Activated T-helper 2 cell treated with anti-CD3 and anti-CD28 coated beads, Interferon-gamma antibody, Interleukin-2, Interleukin-4, amounts not matched to agents 10 μg/mL and 5 μg/mL and 100 μg/mL, durations not matched to agents 14 hours and 24 hours and 36 hours (primary cell): ENCODE measurements at regions of chr20 and their contacts with region 1.

Region 1: GRCh38 chr20:8271727-8272126 is 139.7 kb downstream of the PLCB1 start:
- DNase-seq: no peak
- H3K4me3 Mint-ChIP-seq: no peak overlapping the region
- H3K27ac Mint-ChIP-seq: peak overlapping the region; percentile 33
- H3K4me1 Mint-ChIP-seq: peaks cover 22% of the 10 kb centered on the region
- H3K27me3 Mint-ChIP-seq: peaks cover 6% of the 10 kb centered on the region

Region 2: DNA sequence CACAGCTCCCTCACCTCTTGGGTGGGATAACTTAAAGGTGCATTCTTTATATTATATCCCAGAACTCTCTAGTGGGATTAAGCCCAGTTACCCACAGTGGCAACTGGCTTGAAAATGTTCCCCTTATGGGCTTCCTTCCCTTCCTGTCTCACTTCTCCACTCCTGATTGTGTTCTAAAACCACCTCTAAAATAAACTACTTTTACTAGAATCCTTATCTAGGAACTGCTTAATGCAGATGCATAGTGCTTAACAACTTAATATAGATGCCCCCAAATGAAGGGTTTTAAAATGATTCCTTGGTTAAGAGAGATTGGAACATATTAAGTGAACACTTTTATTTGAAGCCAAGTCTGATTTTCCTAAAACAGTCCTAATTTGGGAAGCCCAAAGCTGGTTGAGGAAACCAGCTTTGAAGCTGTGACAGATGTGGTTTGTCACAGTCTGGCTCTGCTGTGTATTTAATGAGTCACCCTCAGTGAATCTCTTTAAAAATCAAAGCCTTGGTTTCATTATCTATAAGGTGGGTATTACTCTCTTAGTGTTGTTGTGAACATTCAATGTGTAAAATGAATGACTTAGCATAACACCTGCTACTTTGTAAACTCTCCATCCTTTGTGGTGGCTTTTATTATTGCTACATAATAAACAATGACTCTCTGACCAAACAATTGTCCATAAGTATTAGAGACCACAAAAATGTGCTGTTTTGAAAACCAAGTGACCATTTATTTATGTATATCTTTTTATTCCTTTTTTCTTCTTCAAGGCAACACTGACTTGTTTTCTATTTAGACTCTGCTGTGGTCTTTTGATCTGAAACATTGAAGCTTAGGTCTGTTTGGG is 115.3 kb before region 1 on chr20:
- intact Hi-C with region 1: loop called (anchors 5 kb)
- DNase-seq: no peak
- H3K4me3 Mint-ChIP-seq: no peak overlapping the region
- H3K27ac Mint-ChIP-seq: no peak overlapping the region
- H3K4me1 Mint-ChIP-seq: peaks cover 24% of the 10 kb centered on the region
- H3K27me3 Mint-ChIP-seq: peaks cover 7% of the 10 kb centered on the region